CD8-positive, alpha-beta T cell (primary cell): ENCODE measurements at regions of chr2 and their contacts with region 1.

Region 1: GRCh38 chr2:63588385-63589147 is at the starts of genes MDH1 and WDPCP:
- DNase-seq: peak; percentile 84 to 99 (median 91)
- ATAC-seq: peak; percentile 83
- H3K4me3 ChIP-seq: peak within 1 kb of the TSS; percentile 83 to 88
- H3K4me3 Mint-ChIP-seq: peak within 1 kb of the TSS; percentile 90
- H3K27ac ChIP-seq: peak within 1 kb of the TSS; percentile 75 to 95
- H3K27ac Mint-ChIP-seq: peak within 1 kb of the TSS; percentile 95
- H3K4me1 ChIP-seq: peaks cover 19% of the 10 kb centered on the region
- H3K4me1 Mint-ChIP-seq: peaks cover 44% of the 10 kb centered on the region
- H3K27me3 ChIP-seq: no peaks in the 10 kb centered on the region
- H3K27me3 Mint-ChIP-seq: no peaks in the 10 kb centered on the region
- CTCF ChIP-seq: no peak
- total RNA-seq, gene MDH1: 87.2 to 94.8 TPM
- total RNA-seq, gene WDPCP: 9.6 to 11.9 TPM

Region 2: DNA sequence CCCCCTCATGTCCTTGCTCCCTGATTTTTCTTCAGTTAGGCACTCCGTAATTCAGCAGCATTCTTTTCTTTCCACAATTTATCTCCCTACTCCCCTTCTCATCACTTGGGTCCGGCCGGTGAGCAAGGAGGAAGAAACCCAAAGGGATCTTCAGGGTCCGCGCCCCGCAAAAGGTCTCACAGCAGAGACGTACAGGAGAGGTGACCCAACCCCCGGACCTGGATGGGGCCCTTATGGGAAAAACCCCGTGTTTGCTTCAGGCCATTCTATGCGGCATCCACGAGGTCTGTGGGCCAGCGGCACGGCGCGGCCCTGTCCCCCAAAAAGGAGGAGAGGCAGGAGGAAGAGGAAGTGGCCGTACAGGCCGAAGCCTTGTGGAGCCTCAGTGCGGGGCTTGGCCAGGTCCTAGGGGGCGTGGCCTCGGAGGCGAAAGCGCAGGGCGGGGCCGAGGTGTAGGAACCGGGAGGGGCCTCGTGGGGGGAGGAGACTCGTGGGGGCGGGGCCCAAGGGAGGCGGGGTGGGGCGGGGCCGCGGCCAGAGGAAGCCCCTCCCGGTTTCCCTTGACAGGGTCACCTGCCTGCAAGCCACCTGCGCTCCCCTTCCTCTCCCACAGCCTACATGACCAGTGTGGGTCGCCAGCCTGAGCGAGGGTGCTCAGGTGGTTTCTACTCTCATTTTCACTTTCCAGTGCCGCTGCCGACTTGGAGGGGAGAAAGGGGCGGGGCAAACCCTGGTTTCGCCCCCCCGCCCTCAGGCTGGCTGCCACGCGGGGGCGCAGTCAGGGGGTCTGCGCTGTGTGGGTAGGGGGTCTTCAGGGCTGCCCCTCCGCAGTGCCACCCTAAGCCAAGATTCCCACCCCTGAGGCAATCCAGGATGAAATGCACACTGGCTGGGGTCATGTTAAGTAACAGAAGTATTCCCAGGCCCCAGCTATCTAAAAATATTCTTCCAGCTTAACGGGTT is 1894.0 kb before region 1 on chr2:
- CTCF ChIA-PET with region 1: no interaction called
- POLR2A ChIA-PET with region 1: no interaction called
- intact Hi-C with region 1: loop called in 1 of 2 experiments (anchors 10 kb)
- DNase-seq: peak; percentile 65 to 89 (median 82)
- ATAC-seq: peak; percentile 95
- H3K4me3 ChIP-seq: peak overlapping the region; percentile 88 to 93
- H3K4me3 Mint-ChIP-seq: peak overlapping the region; percentile 90
- H3K27ac ChIP-seq: peak overlapping the region; percentile 43 to 63
- H3K27ac Mint-ChIP-seq: peak overlapping the region; percentile 87
- H3K4me1 ChIP-seq: peaks cover 14% of the 10 kb centered on the region
- H3K4me1 Mint-ChIP-seq: peaks cover 16% of the 10 kb centered on the region
- H3K27me3 ChIP-seq: no peaks in the 10 kb centered on the region
- H3K27me3 Mint-ChIP-seq: no peaks in the 10 kb centered on the region
- CTCF ChIP-seq: peak; percentile 52

Region 3: DNA sequence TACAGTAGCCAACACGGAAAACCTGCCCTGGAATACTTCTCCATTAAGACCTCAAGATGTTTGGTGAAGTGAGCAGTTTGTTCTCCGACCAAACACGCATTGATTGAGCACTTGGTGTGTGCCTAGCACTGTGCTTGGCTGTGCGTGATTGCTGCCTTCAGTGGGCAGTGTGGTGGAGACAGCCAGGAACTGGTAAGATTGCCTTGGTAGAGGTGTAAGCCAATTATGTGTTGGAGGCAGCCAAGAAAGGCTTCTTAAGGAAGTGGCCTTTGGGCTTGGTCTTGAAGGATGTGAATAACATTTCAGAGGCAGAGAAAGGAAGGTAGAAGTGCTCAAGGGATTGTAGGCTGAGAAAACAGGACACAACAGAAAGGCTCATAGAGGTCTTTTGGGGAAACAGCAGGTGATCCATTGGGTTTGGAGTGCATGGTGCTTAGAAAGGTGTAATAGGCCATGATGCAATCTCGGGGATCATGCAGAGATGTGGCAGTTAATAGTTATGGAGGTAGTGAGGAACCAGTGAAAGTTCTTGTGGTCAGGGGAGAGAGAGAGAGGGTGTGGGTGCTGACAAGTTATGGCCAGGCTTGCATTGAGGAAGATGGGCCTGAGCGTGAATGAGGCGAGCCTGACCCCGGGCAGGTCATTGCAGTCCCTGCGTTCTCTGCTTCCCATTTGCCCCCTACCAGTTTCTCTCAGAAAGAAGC is 1386.4 kb before region 1 on chr2:
- CTCF ChIA-PET with region 1: no interaction called
- POLR2A ChIA-PET with region 1: no interaction called
- intact Hi-C with region 1: loop called (anchors 5 kb)
- DNase-seq: peak in 1 of 9 experiments; percentile 47
- ATAC-seq: no peak
- H3K4me3 ChIP-seq: no peak overlapping the region
- H3K4me3 Mint-ChIP-seq: peak overlapping the region; percentile 42
- H3K27ac ChIP-seq: peak overlapping the region in 1 of 2 experiments; percentile 50
- H3K27ac Mint-ChIP-seq: peak overlapping the region; percentile 55
- H3K4me1 ChIP-seq: peaks cover 89% of the 10 kb centered on the region
- H3K4me1 Mint-ChIP-seq: peaks cover 98% of the 10 kb centered on the region
- H3K27me3 ChIP-seq: no peaks in the 10 kb centered on the region
- H3K27me3 Mint-ChIP-seq: no peaks in the 10 kb centered on the region
- CTCF ChIP-seq: no peak

Region 4: DNA sequence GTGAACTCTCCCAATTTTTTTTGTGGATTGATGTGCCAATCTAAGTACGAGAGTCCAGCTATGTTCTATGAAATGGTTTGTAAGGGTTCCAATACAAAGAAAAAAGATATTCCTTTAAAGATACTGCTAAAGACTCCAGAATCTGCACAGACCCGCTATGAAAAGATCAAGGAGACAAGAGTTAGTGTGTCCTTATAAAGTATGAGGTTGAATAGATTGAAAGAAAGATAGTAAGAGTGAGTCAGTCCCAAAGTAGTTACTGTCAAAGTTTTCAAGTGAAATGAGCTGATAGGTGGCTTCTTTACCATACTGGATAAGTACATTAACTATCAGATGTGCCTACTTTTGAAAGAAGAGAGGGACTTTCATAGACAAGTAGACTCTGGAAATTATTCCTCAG is 900.9 kb before region 1 on chr2:
- CTCF ChIA-PET with region 1: no interaction called
- POLR2A ChIA-PET with region 1: no interaction called
- intact Hi-C with region 1: no loop called
- DNase-seq: no peak
- ATAC-seq: no peak
- H3K4me3 ChIP-seq: no peak overlapping the region
- H3K4me3 Mint-ChIP-seq: no peak overlapping the region
- H3K27ac ChIP-seq: no peak overlapping the region
- H3K27ac Mint-ChIP-seq: no peak overlapping the region
- H3K4me1 ChIP-seq: no peaks in the 10 kb centered on the region
- H3K4me1 Mint-ChIP-seq: no peaks in the 10 kb centered on the region
- H3K27me3 ChIP-seq: no peaks in the 10 kb centered on the region
- H3K27me3 Mint-ChIP-seq: peaks cover 18% of the 10 kb centered on the region
- CTCF ChIP-seq: no peak

Region 5: DNA sequence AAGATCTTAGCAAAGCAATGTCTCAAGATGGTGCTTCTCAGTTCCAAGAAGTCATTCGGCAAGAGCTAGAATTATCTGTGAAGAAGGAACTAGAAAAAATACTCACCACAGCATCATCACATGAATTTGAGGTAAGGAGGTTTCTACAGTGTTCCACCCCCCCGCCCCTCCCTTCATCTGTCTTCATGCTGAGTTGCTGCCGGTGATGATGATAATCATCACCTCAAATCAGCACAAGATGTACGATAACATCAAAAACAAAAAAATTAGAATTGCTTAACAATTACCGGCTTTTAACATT is 267.7 kb after region 1 on chr2:
- CTCF ChIA-PET with region 1: no interaction called
- POLR2A ChIA-PET with region 1: interaction called, 3 read pairs
- intact Hi-C with region 1: loop called (anchors 2 kb)
- DNase-seq: peak in 7 of 9 experiments; percentile 32 to 89 (median 43)
- ATAC-seq: peak; percentile 88
- H3K4me3 ChIP-seq: peak overlapping the region in 1 of 2 experiments; percentile 1
- H3K4me3 Mint-ChIP-seq: peak overlapping the region; percentile 76
- H3K27ac ChIP-seq: peak overlapping the region; percentile 57 to 69
- H3K27ac Mint-ChIP-seq: peak overlapping the region; percentile 97
- H3K4me1 ChIP-seq: peaks cover 48% of the 10 kb centered on the region
- H3K4me1 Mint-ChIP-seq: peaks cover 64% of the 10 kb centered on the region
- H3K27me3 ChIP-seq: no peaks in the 10 kb centered on the region
- H3K27me3 Mint-ChIP-seq: no peaks in the 10 kb centered on the region
- CTCF ChIP-seq: no peak

Region 6: GRCh38 chr2:64144057-64145013 is 555.8 kb after region 1 on chr2 and contains the start of gene PELI1:
- CTCF ChIA-PET with region 1: no interaction called
- POLR2A ChIA-PET with region 1: no interaction called
- intact Hi-C with region 1: loop called (anchors 2 kb)
- DNase-seq: peak; percentile 86 to 94 (median 91)
- ATAC-seq: peak; percentile 93
- H3K4me3 ChIP-seq: peak within 1 kb of the TSS; percentile 86 to 87
- H3K4me3 Mint-ChIP-seq: peak within 1 kb of the TSS; percentile 98
- H3K27ac ChIP-seq: peak within 1 kb of the TSS; percentile 78 to 91
- H3K27ac Mint-ChIP-seq: peak within 1 kb of the TSS; percentile 99
- H3K4me1 ChIP-seq: peaks cover 13% of the 10 kb centered on the region
- H3K4me1 Mint-ChIP-seq: peaks cover 34% of the 10 kb centered on the region
- H3K27me3 ChIP-seq: no peaks in the 10 kb centered on the region
- H3K27me3 Mint-ChIP-seq: no peaks in the 10 kb centered on the region
- CTCF ChIP-seq: no peak
- total RNA-seq, gene PELI1: 213 to 216 TPM

Region 7: GRCh38 chr2:65227425-65228262 is 1639.1 kb after region 1 on chr2 and contains the start of gene ACTR2:
- CTCF ChIA-PET with region 1: no interaction called
- POLR2A ChIA-PET with region 1: no interaction called
- intact Hi-C with region 1: loop called in 1 of 2 experiments (anchors 2 kb)
- DNase-seq: peak; percentile 87 to 98 (median 94)
- ATAC-seq: peak; percentile 94
- H3K4me3 ChIP-seq: peak within 1 kb of the TSS; percentile 74 to 89
- H3K4me3 Mint-ChIP-seq: peak within 1 kb of the TSS; percentile 99
- H3K27ac ChIP-seq: peak within 1 kb of the TSS; percentile 94 to 98
- H3K27ac Mint-ChIP-seq: peak within 1 kb of the TSS; percentile 99
- H3K4me1 ChIP-seq: peaks cover 43% of the 10 kb centered on the region
- H3K4me1 Mint-ChIP-seq: peaks cover 47% of the 10 kb centered on the region
- H3K27me3 ChIP-seq: no peaks in the 10 kb centered on the region
- H3K27me3 Mint-ChIP-seq: no peaks in the 10 kb centered on the region
- CTCF ChIP-seq: no peak
- total RNA-seq, gene ACTR2: 101 to 117 TPM